WTC11 (cell line): ENCODE measurements at regions of chrX and their contacts with region 1.

Region 1: GRCh38 chrX:49884290-49884862 is 5.1 kb downstream of the USP27X start:
- DNase-seq: peak; percentile 73
- ATAC-seq: peak; percentile 77
- H3K4me3 Mint-ChIP-seq: no peak overlapping the region
- H3K27ac Mint-ChIP-seq: no peak overlapping the region
- H3K4me1 Mint-ChIP-seq: peaks cover 18% of the 10 kb centered on the region
- H3K27me3 Mint-ChIP-seq: no peaks in the 10 kb centered on the region; the same call in 1 of the 2 replicates
- CTCF ChIP-seq: peak; percentile 48

Region 2: DNA sequence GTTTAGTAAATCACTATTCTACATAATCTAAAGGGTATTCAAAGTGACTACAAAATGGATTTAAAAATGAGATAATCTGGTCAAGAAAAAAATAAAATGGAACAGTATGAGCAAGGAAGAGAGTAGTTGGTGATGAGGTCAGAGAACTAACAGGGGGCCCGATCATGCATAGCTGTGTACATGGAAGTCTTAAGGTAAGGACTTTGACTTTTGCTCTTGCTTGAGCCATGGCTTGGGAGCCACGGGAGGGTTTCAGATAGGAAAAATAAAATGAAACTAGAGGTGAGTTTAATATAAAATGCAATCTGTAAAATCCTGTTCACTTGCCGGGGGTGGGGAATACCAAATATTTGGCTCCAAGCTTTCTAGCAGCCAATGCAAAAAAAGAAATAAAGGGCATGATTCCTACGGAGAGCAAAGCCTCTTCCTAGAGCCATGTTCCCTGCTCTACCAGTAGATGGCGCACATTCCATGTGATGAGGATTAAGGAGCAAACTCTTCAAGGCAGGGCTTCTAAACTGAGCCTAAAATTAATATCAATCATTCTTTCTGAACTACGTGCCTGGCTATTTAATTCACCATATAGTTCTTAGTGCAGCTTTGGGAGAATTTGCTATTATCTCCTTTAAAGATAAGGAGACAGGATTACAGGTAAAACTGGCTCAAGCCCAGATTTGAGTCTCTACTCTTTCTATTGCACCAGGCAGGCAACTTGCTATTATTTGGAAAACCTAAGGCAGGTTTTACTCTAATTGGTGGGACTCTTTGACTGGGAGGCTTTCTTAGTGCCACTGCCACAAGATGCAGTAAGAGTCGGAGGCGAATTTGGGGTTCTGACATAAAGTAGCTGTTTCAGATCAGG is 31.2 kb after region 1 on chrX:
- CTCF ChIA-PET with region 1: interaction called, 25 read pairs
- POLR2A ChIA-PET with region 1: no interaction called
- DNase-seq: peak; percentile 25
- ATAC-seq: peak; percentile 67
- H3K4me3 Mint-ChIP-seq: no peak overlapping the region
- H3K27ac Mint-ChIP-seq: no peak overlapping the region
- H3K4me1 Mint-ChIP-seq: peaks cover 9% of the 10 kb centered on the region
- H3K27me3 Mint-ChIP-seq: no peaks in the 10 kb centered on the region; the same call in 1 of the 2 replicates
- CTCF ChIP-seq: peak; percentile 40

Region 3: GRCh38 chrX:49922291-49923241 is 38.2 kb after region 1 on chrX and contains the start of gene CLCN5:
- CTCF ChIA-PET with region 1: interaction called, 25 read pairs
- POLR2A ChIA-PET with region 1: interaction called, 3 read pairs
- DNase-seq: peak; percentile 93
- ATAC-seq: peak; percentile 91
- H3K4me3 Mint-ChIP-seq: peak within 1 kb of the TSS; percentile 79
- H3K27ac Mint-ChIP-seq: peak within 1 kb of the TSS; percentile 80
- H3K4me1 Mint-ChIP-seq: peaks cover 25% of the 10 kb centered on the region
- H3K27me3 Mint-ChIP-seq: peaks cover 19% of the 10 kb centered on the region
- CTCF ChIP-seq: no peak
- total RNA-seq, gene CLCN5: 10.7 to 14.2 TPM (median 13.3 TPM) in 3 replicates